GM18951 (cell line): ENCODE measurements at regions of chr3 and their contacts with region 1.

Region 1: DNA sequence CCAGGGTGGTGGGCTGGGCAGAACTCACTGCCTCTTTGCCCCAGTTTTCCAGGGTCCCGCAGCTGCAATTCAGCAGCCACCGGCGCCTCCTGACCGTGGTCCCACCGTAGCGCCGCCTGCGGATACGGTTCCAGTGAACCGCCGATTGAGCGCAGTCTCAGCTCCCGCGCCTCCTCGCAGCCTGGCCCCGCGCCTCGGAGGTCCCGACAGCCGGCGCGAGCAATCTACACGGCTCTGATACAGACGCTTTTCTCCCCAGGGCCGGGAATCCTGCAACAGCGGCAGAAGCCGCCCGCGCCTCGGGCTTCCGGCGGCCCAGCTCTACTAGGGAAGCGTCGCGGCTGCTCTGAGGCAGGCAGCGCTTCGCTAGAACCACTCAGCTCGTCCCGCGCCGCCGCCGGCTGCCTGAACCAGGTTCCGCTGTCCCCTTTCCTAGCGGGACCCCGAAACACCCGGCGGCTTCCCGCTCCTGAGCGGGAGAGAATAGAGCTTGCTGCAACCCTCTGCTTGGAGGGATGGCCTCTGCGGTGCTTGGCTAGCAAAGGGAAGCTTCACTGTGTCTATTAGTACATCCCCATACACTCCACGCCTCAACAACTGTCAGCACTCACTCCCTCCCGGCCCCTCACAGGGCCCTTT is 3.1 kb downstream of the FOXL2NB start:
- POLR2A ChIP-seq: no peak

Region 2: GRCh38 chr3:139099968-139100817 is 150.1 kb after region 1 on chr3:
- in situ Hi-C with region 1: loop called (anchors 10 kb)
- POLR2A ChIP-seq: no peak

Region 3: GRCh38 chr3:139481116-139481515 is 531.0 kb after region 1 on chr3:
- in situ Hi-C with region 1: no loop called
- POLR2A ChIP-seq: no peak